ENCODE measurements at regions of chr17 and their contacts with region 1.

Region 1: GRCh38 chr17:82077617-82078358 is 12.2 kb upstream of the DUS1L start:
- DNase-seq: peak in 1 of 4 experiments; percentile 38
- ATAC-seq: peak; percentile 27
- H3K4me3 ChIP-seq: no peak overlapping the region
- H3K27ac ChIP-seq: no peak overlapping the region
- H3K4me1 ChIP-seq: peaks cover 0 to 57% of the 10 kb centered on the region in 2 experiments; a peak in 2 of 5 replicates
- H3K27me3 ChIP-seq: no peaks in the 10 kb centered on the region
- CTCF ChIP-seq: peak in 2 of 3 experiments; percentile 7 to 29; a peak in 2 of 6 replicates
- EP300 ChIP-seq: no peak
- POLR2A ChIP-seq: peak; percentile 79
- RAD21 ChIP-seq: no peak

Region 2: DNA sequence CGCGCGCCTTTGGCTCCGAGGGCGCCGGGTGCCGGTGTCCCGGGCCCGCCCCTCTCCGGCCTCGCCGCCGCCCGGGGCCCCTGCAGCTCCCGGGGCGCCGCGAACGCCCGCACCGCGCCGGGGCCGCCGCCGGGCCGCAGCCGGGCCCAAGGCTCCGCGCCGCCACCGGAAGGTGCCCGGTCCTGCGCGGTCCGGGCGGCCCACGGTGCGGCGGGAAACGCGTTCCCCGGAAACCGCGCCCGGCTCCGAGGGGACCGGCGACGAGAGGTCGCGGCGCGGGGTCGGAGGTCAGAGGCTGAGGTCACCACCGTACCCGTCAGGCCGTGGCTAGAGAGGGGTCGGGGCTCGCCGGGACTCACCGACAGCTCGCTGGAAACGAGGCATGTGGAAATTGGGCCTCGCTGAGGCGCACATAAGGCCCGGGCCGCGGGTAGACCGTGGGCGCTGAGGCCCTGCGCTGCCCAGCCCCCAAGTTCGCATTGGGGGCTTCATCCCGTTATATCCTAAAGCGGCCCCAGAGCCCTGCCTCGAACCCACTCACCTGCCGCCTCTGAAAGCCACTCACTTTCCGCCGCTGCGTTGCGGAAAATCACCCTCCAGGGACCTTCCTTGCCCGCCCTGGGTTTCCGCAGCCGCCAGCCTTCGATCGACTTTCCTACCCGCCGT is 12.0 kb before region 1 on chr17 and contains the start of gene DUS1L:
- CTCF ChIA-PET with region 1: no interaction called
- POLR2A ChIA-PET with region 1: interaction called, 24 read pairs
- in situ Hi-C with region 1: no loop called
- intact Hi-C with region 1: no loop called
- DNase-seq: peak; percentile 76 to 91 (median 89)
- ATAC-seq: peak; percentile 81
- H3K4me3 ChIP-seq: peak within 1 kb of the TSS; percentile 99
- H3K27ac ChIP-seq: peak within 1 kb of the TSS; percentile 87
- H3K4me1 ChIP-seq: peaks cover 3 to 54% of the 10 kb centered on the region in 2 experiments; a peak in 3 of 5 replicates
- H3K27me3 ChIP-seq: no peaks in the 10 kb centered on the region
- CTCF ChIP-seq: no peak
- EP300 ChIP-seq: 0 out of 2 replicates have a peak, but pooled peaks have one; percentile 31
- POLR2A ChIP-seq: no peak
- RAD21 ChIP-seq: no peak
- polyA plus RNA-seq, gene DUS1L: 7.8 to 11.3 TPM

Region 3: GRCh38 chr17:82089723-82090548 is 12.1 kb after region 1 on chr17:
- CTCF ChIA-PET with region 1: no interaction called
- POLR2A ChIA-PET with region 1: interaction called, 52 read pairs
- in situ Hi-C with region 1: no loop called
- intact Hi-C with region 1: no loop called
- DNase-seq: no peak
- ATAC-seq: no peak
- H3K4me3 ChIP-seq: no peak overlapping the region
- H3K27ac ChIP-seq: no peak overlapping the region
- H3K4me1 ChIP-seq: peaks cover 0 to 60% of the 10 kb centered on the region in 2 experiments; a peak in 1 of 5 replicates
- H3K27me3 ChIP-seq: no peaks in the 10 kb centered on the region
- CTCF ChIP-seq: no peak
- EP300 ChIP-seq: no peak
- POLR2A ChIP-seq: peak; percentile 8; the same call in 1 of the 2 replicates
- RAD21 ChIP-seq: no peak

Region 4: GRCh38 chr17:82098072-82098821 is 20.5 kb after region 1 on chr17 and contains the start of gene FASN:
- CTCF ChIA-PET with region 1: no interaction called
- POLR2A ChIA-PET with region 1: interaction called, 11 read pairs
- in situ Hi-C with region 1: no loop called
- intact Hi-C with region 1: no loop called
- DNase-seq: peak; percentile 96 to 99 (median 98)
- ATAC-seq: peak; percentile 78
- H3K4me3 ChIP-seq: peak within 1 kb of the TSS; percentile 97
- H3K27ac ChIP-seq: peak within 1 kb of the TSS; percentile 95
- H3K4me1 ChIP-seq: peaks cover 36 to 92% of the 10 kb centered on the region in 2 experiments
- H3K27me3 ChIP-seq: no peaks in the 10 kb centered on the region
- CTCF ChIP-seq: peak; percentile 41 to 77 (median 72); a peak in 5 of 6 replicates
- EP300 ChIP-seq: no peak; the same call in 1 of the 2 replicates
- POLR2A ChIP-seq: peak; percentile 84
- RAD21 ChIP-seq: peak; percentile 22 to 42; a peak in 3 of 4 replicates
- polyA plus RNA-seq, gene FASN: 0.15 to 0.20 TPM